ENCODE measurements at regions of chr7 and their contacts with region 1.

Region 1: DNA sequence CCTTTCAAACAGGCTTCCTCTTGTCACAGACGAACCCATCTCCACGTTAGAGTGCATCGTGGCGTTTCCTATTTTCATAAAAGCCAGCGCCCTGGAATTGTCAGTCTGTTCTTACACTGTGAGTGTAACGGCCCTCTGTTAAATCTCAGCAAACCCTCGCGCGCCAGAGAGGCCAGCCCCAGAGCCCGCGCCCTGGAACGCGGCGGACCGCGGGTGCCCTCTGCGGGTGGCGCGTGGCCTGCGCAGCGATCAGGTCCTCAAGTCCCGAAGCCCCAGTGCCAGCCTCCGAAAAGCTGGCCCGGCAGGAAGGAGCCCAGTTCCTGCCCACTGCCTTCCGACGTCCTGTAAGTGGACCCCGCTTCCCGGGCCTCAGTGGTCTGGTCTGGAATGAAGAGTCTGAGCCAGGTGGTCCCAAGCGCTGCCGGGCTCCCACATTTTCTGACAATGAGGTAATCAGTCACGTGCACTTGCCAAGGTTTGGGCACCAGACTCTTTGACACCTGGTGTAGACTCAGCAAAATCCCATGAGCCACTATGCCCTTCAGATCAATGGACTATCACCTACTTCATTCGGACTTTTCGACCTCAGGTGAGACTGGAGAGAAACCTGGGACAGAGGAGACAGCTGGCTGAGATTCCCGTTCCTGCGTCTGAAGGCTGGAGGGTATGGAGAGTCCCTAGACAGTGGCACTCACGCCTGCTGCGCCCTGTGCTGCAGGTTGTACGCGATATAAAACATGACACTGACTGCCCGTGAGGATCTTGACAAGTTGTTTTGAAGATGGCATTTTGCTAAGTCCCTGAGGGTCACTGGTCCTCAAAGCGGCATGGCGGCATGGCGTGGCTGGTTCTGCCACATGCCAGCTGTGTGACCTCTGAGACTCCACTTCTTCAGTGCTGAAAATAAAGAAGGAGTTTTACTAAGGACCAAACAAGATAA is 109.4 kb upstream of the LANCL2 start:
- H3K4me3 ChIP-seq: peak overlapping the region; percentile 39
- H3K27ac ChIP-seq: peak overlapping the region; percentile 66; the same call in 1 of the 2 replicates
- H3K4me1 ChIP-seq: peaks cover 6% of the 10 kb centered on the region; the same call in 1 of the 2 replicates
- CTCF ChIP-seq: peak; percentile 79

Region 2: GRCh38 chr7:54758702-54759592 is 496.8 kb before region 1 on chr7 and contains the start of gene SEC61G:
- CTCF ChIA-PET with region 1: interaction called, 34 read pairs
- POLR2A ChIA-PET with region 1: interaction called, 13 read pairs
- H3K4me3 ChIP-seq: peak within 1 kb of the TSS; percentile 98
- H3K27ac ChIP-seq: peak within 1 kb of the TSS; percentile 76
- H3K4me1 ChIP-seq: peaks cover 4% of the 10 kb centered on the region; the same call in 1 of the 2 replicates
- CTCF ChIP-seq: no peak

Region 3: DNA sequence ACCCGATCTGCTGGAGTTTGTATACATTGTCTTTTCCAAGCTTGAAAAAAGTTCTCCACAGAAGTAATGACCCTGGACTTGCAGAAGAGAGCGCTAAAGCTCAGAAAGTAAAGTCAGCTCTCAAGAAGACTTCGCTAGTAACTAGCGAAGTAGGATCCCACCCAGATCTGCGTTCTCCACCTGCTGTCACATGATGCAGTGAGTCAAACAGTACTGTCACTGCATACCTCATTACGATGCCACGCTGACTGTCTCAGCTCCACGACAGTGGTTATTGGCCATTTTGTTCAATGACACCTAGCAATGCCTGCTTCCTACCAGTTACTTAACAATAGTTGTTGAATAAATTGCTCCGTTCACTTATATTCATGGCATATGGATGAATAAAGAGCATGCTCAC is 467.1 kb before region 1 on chr7:
- CTCF ChIA-PET with region 1: interaction called, 87 read pairs
- POLR2A ChIA-PET with region 1: interaction called, 12 read pairs
- H3K4me3 ChIP-seq: no peak overlapping the region
- H3K27ac ChIP-seq: no peak overlapping the region
- H3K4me1 ChIP-seq: no peaks in the 10 kb centered on the region
- CTCF ChIP-seq: peak; percentile 30; the same call in 1 of the 2 replicates

Region 4: DNA sequence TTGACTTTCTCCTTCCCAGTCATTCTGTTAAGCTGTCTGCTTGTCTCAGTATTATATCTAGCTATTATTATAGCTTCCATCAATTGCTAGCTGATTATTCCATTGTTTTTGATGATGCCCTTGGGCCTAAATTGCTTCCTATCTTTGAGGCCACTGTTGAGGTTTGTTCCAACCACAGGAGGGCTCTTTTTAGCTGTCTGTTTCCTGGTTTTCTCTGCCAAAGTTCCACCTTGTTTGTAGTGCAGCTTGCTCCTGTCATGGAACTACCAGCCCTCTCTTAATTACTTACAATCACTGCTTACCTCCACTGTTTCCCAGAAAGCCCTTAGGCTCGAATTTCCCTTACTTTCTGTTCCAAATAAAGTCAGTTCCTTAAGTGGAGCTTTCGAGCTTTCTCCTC is 378.1 kb before region 1 on chr7:
- CTCF ChIA-PET with region 1: interaction called, 18 read pairs
- POLR2A ChIA-PET with region 1: no interaction called
- H3K4me3 ChIP-seq: no peak overlapping the region
- H3K27ac ChIP-seq: no peak overlapping the region
- H3K4me1 ChIP-seq: no peaks in the 10 kb centered on the region
- CTCF ChIP-seq: no peak

Region 5: GRCh38 chr7:55016056-55016745 is 239.6 kb before region 1 on chr7:
- CTCF ChIA-PET with region 1: interaction called, 11 read pairs
- POLR2A ChIA-PET with region 1: no interaction called
- H3K4me3 ChIP-seq: no peak overlapping the region
- H3K27ac ChIP-seq: no peak overlapping the region
- H3K4me1 ChIP-seq: peaks cover 3% of the 10 kb centered on the region; the same call in 1 of the 2 replicates
- CTCF ChIP-seq: no peak

Region 6: GRCh38 chr7:55124989-55125868 is 130.5 kb before region 1 on chr7:
- CTCF ChIA-PET with region 1: interaction called, 10 read pairs
- POLR2A ChIA-PET with region 1: no interaction called
- H3K4me3 ChIP-seq: no peak overlapping the region
- H3K27ac ChIP-seq: no peak overlapping the region; the same call in 1 of the 2 replicates
- H3K4me1 ChIP-seq: peaks cover 37% of the 10 kb centered on the region
- CTCF ChIP-seq: no peak

Region 7: DNA sequence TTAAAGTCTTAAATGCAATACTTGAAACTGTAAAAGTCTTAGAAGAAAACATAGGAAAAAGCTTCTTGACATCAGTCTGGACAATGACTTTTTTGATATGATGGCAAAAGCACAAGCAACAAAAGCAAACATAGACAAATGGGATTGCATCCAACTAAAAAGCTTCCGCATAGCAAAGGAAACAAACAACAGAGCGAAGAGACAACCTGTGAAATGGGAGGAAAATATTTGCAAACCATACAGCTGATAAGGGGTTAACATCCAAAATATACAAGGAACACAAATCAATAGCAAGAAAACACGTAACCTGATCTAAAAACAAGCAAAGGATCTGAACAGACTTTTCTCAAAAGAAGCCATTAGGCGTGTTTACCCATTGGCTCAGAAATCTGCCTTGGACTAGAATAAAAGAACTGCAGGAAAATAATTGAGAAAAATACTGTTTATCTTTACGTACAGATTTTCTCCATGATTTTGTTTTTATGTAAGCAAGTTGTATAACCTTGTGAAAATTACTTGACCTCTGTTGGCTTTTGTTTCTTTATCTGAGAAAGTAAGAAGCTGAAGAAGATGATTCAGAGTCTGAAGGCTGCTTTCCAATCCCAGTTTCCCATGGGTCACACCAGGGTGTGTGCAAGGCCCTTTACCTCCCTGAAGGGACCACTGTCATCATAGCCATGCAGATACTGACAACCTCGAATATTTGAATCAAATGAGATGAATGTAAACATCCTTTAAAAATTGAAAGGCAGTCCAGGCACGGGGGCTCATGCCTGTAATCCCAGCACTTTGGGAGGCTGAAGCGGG is 10.3 kb after region 1 on chr7:
- CTCF ChIA-PET with region 1: interaction called, 15 read pairs
- POLR2A ChIA-PET with region 1: no interaction called
- H3K4me3 ChIP-seq: no peak overlapping the region
- H3K27ac ChIP-seq: no peak overlapping the region
- H3K4me1 ChIP-seq: no peaks in the 10 kb centered on the region
- CTCF ChIP-seq: no peak